ENCODE measurements at regions of chr10 and their contacts with region 1.

Region 1: DNA sequence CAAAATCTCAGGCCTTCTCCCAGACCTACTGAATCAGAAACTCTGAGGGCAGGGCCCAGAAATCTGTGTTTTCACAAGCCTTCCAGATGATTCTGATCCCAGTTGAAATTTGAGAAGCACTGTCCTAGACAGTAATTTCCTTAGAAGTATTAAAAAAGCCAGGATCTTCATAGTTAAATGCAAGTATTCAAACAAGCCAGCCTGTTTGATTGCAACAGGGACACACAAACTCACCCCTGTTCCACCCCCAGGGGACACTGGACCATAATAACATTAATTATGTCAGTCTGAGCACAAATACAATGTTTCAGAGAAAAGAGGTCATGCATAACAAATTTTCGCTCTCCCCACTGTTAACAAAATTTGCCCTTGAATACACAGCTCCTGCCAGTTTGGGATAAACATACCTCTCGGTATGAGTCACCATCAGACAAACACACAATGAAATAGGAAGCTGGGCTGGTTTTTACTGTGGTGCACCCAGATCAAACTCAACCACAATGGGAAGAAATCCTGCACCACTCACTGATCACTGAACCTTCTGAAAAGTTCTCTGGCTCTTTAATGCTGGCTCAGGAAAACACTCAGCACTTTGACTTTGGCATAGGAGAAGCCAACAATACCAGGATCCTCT is 34.3 kb downstream of the ABLIM1 start:
- DNase-seq: peak; percentile 84
- H3K4me3 ChIP-seq: no peak overlapping the region
- H3K27ac ChIP-seq: peak overlapping the region; percentile 18
- H3K4me1 ChIP-seq: peaks cover 52% of the 10 kb centered on the region
- H3K27me3 ChIP-seq: no peaks in the 10 kb centered on the region
- CTCF ChIP-seq: no peak

Region 2: GRCh38 chr10:114577133-114577532 is 46.6 kb before region 1 on chr10:
- CTCF ChIA-PET with region 1: no interaction called
- dilution Hi-C with region 1: no loop called
- in situ Hi-C with region 1: no loop called
- intact Hi-C with region 1: loop called (anchors 2 kb)
- DNase-seq: peak; percentile 74
- H3K4me3 ChIP-seq: no peak overlapping the region
- H3K27ac ChIP-seq: no peak overlapping the region
- H3K4me1 ChIP-seq: peaks cover 26% of the 10 kb centered on the region
- H3K27me3 ChIP-seq: no peaks in the 10 kb centered on the region
- CTCF ChIP-seq: no peak

Region 3: GRCh38 chr10:114684085-114684821 is 60.5 kb after region 1 on chr10:
- CTCF ChIA-PET with region 1: no interaction called
- dilution Hi-C with region 1: loop called (anchors 5 kb)
- in situ Hi-C with region 1: no loop called
- intact Hi-C with region 1: loop called (anchors 2 kb)
- DNase-seq: no peak
- H3K4me3 ChIP-seq: no peak overlapping the region
- H3K27ac ChIP-seq: no peak overlapping the region
- H3K4me1 ChIP-seq: peaks cover 36% of the 10 kb centered on the region
- H3K27me3 ChIP-seq: no peaks in the 10 kb centered on the region
- CTCF ChIP-seq: no peak

Region 4: GRCh38 chr10:114779803-114780609 is 156.2 kb after region 1 on chr10:
- CTCF ChIA-PET with region 1: no interaction called
- dilution Hi-C with region 1: no loop called
- in situ Hi-C with region 1: no loop called
- intact Hi-C with region 1: loop called (anchors 5 kb)
- DNase-seq: peak; percentile 83
- H3K4me3 ChIP-seq: no peak overlapping the region
- H3K27ac ChIP-seq: peak overlapping the region; percentile 75
- H3K4me1 ChIP-seq: peaks cover 24% of the 10 kb centered on the region
- H3K27me3 ChIP-seq: no peaks in the 10 kb centered on the region
- CTCF ChIP-seq: no peak